ENCODE measurements at regions of chr1 and their contacts with region 1.

Region 1: GRCh38 chr1:110766025-110766647 is 91.4 kb upstream of the KCNA3 start:
- DNase-seq: peak; percentile 34
- H3K4me3 Mint-ChIP-seq: no peak overlapping the region
- H3K27ac Mint-ChIP-seq: no peak overlapping the region
- H3K4me1 Mint-ChIP-seq: peaks cover 14% of the 10 kb centered on the region
- H3K27me3 Mint-ChIP-seq: peaks cover 17% of the 10 kb centered on the region

Region 2: GRCh38 chr1:109762821-109763645 is 1003.1 kb before region 1 on chr1:
- intact Hi-C with region 1: no loop called
- DNase-seq: no peak
- H3K4me3 Mint-ChIP-seq: no peak overlapping the region
- H3K27ac Mint-ChIP-seq: no peak overlapping the region
- H3K4me1 Mint-ChIP-seq: no peaks in the 10 kb centered on the region
- H3K27me3 Mint-ChIP-seq: peaks cover 1% of the 10 kb centered on the region

Region 3: DNA sequence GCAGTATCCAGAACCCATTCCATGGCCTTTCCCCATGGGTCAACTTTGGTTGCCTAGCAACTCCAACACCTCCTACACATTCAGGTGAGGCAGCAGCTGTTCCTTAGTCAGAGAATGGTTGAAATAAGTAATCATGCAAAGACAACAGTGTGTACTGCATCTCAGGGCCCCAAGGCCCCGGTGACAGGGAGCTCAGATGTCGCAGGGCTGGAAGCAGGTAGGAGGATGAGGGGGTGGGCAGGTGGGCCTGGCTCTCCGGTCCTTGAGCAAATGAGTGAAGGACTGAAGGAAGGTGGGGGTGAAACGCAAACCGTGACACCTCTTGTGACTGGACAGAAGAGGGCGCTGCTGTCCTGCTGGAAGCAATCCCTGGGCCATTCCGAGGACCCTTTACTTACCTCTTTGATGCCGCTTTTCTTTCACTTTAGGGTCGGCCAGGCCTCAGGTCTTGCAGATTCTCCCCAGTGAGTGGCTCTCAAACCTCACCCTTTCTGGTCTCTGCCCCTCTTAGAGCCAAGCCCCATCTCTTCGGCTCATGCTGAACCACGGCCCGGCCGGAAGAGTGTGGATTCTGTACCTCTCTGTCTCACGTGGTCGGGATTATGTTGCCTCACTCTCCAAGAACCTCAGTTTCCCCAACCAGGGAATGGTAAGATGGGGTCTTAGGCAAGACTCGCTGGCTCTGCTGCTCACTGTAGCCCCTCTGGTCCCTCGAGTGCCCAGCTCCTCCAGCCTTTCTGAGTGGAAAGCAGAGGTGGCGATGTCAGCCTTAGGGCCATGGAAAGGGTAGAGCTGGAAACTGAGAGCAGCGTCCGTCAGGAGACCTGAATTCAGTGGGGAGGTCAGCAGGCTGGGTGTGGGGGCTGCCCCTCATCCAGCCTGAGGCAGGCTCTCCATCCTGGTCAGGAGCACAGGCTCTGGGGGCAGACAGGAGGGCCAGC is 241.6 kb before region 1 on chr1:
- intact Hi-C with region 1: loop called (anchors 1 kb)
- DNase-seq: peak; percentile 28
- H3K4me3 Mint-ChIP-seq: no peak overlapping the region
- H3K27ac Mint-ChIP-seq: no peak overlapping the region
- H3K4me1 Mint-ChIP-seq: peaks cover 7% of the 10 kb centered on the region
- H3K27me3 Mint-ChIP-seq: peaks cover 25% of the 10 kb centered on the region

Region 4: GRCh38 chr1:110630839-110631663 is 135.1 kb before region 1 on chr1:
- intact Hi-C with region 1: loop called (anchors 1 kb)
- DNase-seq: peak; percentile 84
- H3K4me3 Mint-ChIP-seq: no peak overlapping the region
- H3K27ac Mint-ChIP-seq: no peak overlapping the region
- H3K4me1 Mint-ChIP-seq: peaks cover 67% of the 10 kb centered on the region
- H3K27me3 Mint-ChIP-seq: no peaks in the 10 kb centered on the region

Region 5: GRCh38 chr1:111789666-111790316 is 1023.7 kb after region 1 on chr1:
- intact Hi-C with region 1: no loop called
- DNase-seq: no peak
- H3K4me3 Mint-ChIP-seq: no peak overlapping the region
- H3K27ac Mint-ChIP-seq: no peak overlapping the region
- H3K4me1 Mint-ChIP-seq: no peaks in the 10 kb centered on the region
- H3K27me3 Mint-ChIP-seq: peaks cover 22% of the 10 kb centered on the region